Esophagus squamous epithelium (tissue), 5 donors: ENCODE measurements at regions of chr18 and their contacts with region 1.

Region 1: GRCh38 chr18:24014062-24014985 is at the start of gene TTC39C:
- DNase-seq: peak; percentile 49
- H3K4me3 ChIP-seq: peak within 1 kb of the TSS; percentile 82 to 94 (median 88)
- H3K27ac ChIP-seq: peak within 1 kb of the TSS; percentile 87 to 94 (median 90)
- H3K4me1 ChIP-seq: peaks cover 5 to 59% (median 8%) of the 10 kb centered on the region in 3 donors
- H3K27me3 ChIP-seq: no peaks in the 10 kb centered on the region
- CTCF ChIP-seq: peak in 1 of 6 experiments; percentile 6
- POLR2A ChIP-seq: peak in 2 of 4 donors; percentile 56 to 63
- total RNA-seq, gene TTC39C: 12.3 to 35.9 (median 24.8) TPM

Region 2: DNA sequence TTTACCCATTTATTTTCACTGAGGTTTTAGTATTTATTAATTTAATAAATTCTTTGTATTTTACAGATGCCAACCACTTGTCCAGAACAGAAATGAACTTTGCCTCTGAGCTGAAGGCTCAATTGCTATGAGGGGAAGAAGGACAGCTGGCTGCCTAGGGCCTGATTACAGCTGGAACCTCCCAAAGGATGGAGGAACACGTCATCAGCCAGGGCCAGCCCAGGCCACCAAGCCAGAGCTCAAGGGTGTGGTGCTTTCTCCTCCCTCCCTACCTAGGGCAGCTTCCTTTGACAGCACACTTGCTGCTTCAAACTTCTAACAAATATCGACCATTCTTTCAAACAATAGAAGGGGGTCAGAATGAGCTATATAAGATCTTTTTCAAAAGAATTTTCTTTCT is 581.0 kb before region 1 on chr18:
- intact Hi-C with region 1: no loop called
- DNase-seq: no peak
- H3K4me3 ChIP-seq: no peak overlapping the region
- H3K27ac ChIP-seq: no peak overlapping the region
- H3K4me1 ChIP-seq: peaks cover 7 to 19% (median 10%) of the 10 kb centered on the region in 3 donors
- H3K27me3 ChIP-seq: no peaks in the 10 kb centered on the region
- CTCF ChIP-seq: no peak
- POLR2A ChIP-seq: no peak

Region 3: DNA sequence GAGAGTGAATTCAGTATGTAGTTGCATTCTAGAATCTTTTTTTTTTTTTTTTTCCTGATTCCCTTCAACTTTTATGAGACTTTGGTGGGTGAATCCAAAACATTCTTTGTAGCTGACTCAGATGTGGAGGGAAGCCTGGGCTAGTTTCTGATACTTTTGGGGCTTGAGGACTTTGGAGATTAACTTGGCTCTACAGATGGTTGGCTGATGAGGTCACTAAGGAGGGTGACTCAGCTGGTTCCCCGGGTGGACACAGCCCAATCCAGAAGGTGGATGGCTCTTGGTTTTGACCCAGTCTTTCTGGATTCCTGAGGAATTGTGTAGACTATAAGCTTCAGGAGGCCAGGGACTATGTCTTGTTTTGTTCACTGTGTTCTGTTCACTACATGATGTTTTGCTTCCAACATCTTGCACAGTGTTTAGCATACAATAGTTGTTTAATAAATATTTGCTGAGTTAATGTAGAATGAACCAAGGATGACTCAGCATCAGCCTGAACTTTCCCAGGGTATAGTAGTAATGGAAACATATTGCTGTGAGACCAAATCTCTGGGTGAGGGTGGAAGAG is 294.6 kb before region 1 on chr18:
- intact Hi-C with region 1: no loop called
- DNase-seq: no peak
- H3K4me3 ChIP-seq: no peak overlapping the region
- H3K27ac ChIP-seq: peak overlapping the region in 2 of 4 donors; percentile 46 to 50
- H3K4me1 ChIP-seq: peaks cover 4 to 64% (median 13%) of the 10 kb centered on the region in 3 donors
- H3K27me3 ChIP-seq: no peaks in the 10 kb centered on the region
- CTCF ChIP-seq: no peak
- POLR2A ChIP-seq: no peak

Region 4: GRCh38 chr18:24063121-24063731 is 48.9 kb after region 1 on chr18:
- intact Hi-C with region 1: loop called (anchors 10 kb)
- DNase-seq: no peak
- H3K4me3 ChIP-seq: no peak overlapping the region
- H3K27ac ChIP-seq: no peak overlapping the region
- H3K4me1 ChIP-seq: peaks cover 0 to 23% (median 2%) of the 10 kb centered on the region in 3 donors
- H3K27me3 ChIP-seq: no peaks in the 10 kb centered on the region
- CTCF ChIP-seq: no peak
- POLR2A ChIP-seq: no peak